ENCODE measurements at regions of chr6 and their contacts with region 1.

Region 1: DNA sequence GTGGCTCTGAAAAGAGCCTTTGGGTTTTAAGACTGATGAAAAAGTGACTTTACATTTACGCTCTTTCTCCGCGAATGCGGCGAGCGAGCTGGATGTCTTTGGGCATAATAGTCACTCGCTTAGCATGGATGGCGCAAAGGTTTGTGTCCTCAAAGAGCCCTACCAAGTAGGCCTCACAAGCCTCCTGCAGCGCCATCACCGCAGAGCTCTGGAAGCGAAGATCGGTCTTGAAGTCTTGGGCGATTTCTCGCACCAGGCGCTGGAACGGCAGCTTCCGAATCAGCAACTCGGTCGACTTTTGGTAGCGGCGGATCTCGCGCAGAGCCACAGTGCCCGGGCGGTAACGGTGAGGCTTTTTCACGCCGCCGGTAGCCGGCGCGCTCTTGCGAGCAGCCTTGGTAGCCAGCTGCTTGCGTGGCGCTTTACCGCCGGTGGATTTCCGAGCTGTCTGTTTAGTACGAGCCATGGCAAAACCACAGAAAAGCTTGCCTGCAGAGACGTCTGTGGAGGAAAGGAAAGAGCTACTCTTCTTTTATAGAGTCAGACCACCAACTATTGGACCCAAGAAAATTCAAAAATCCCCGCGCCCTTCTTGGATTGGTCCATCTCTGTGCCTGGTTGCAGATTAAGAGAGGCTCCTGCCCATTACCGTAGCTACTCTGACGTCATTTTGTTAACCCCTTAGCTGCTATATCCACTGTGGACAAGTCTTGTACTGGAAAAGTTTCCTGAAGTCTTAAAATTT is 55.5 kb upstream of the HFE start:
- DNase-seq: peak; percentile 91 to 95
- H3K4me3 ChIP-seq: peak overlapping the region; percentile 81
- H3K27ac ChIP-seq: peak overlapping the region; percentile 79
- H3K4me1 ChIP-seq: peaks cover 46% of the 10 kb centered on the region
- H3K27me3 ChIP-seq: no peaks in the 10 kb centered on the region
- CTCF ChIP-seq: no peak

Region 2: DNA sequence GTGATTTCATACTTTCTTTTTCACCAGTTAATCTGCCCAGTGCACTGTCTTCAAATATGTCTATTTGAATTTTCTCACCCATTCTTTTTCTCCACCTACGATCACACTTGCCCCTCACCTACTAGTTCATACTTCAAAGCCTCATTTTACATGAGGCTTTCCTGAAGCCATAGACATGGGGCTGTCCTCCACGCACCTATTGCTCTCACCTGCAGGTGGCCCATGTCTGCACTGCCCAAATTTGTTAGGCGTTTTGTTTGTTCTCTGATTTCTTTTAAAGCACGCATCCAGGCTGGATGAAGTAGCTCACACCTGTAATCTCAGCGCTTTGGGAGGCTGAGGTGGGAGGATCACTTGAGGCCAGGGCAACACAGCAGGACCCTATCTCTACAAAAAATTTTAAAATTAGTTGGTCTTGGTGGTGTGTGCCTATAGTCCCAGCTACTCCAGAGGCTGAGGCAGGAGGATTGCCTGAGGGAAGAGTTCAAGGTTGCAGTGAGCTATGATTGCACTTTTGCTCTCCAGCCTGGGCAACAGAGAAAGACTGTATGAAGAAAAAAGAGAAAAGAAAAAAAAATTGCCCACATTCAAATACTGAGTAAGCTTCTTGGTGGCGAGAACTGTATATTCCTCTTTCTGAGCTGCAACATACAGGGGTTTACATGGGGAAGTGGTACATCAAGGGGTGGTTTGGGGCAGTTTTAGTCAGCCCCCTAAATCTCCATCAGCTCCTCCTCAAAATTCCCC is 989.1 kb before region 1 on chr6:
- CTCF ChIA-PET with region 1: interaction called, 14 read pairs
- POLR2A ChIA-PET with region 1: no interaction called
- intact Hi-C with region 1: no loop called
- DNase-seq: no peak
- H3K4me3 ChIP-seq: no peak overlapping the region
- H3K27ac ChIP-seq: no peak overlapping the region
- H3K4me1 ChIP-seq: no peaks in the 10 kb centered on the region
- H3K27me3 ChIP-seq: no peaks in the 10 kb centered on the region
- CTCF ChIP-seq: no peak

Region 3: GRCh38 chr6:25596928-25597818 is 434.6 kb before region 1 on chr6:
- CTCF ChIA-PET with region 1: no interaction called
- POLR2A ChIA-PET with region 1: no interaction called
- intact Hi-C with region 1: no loop called
- DNase-seq: no peak
- H3K4me3 ChIP-seq: no peak overlapping the region
- H3K27ac ChIP-seq: no peak overlapping the region
- H3K4me1 ChIP-seq: no peaks in the 10 kb centered on the region
- H3K27me3 ChIP-seq: no peaks in the 10 kb centered on the region
- CTCF ChIP-seq: no peak

Region 4: GRCh38 chr6:25788305-25788922 is 243.4 kb before region 1 on chr6:
- CTCF ChIA-PET with region 1: no interaction called
- POLR2A ChIA-PET with region 1: no interaction called
- intact Hi-C with region 1: no loop called
- DNase-seq: peak; percentile 33 to 41
- H3K4me3 ChIP-seq: no peak overlapping the region
- H3K27ac ChIP-seq: no peak overlapping the region
- H3K4me1 ChIP-seq: no peaks in the 10 kb centered on the region
- H3K27me3 ChIP-seq: no peaks in the 10 kb centered on the region
- CTCF ChIP-seq: peak; percentile 66

Region 5: DNA sequence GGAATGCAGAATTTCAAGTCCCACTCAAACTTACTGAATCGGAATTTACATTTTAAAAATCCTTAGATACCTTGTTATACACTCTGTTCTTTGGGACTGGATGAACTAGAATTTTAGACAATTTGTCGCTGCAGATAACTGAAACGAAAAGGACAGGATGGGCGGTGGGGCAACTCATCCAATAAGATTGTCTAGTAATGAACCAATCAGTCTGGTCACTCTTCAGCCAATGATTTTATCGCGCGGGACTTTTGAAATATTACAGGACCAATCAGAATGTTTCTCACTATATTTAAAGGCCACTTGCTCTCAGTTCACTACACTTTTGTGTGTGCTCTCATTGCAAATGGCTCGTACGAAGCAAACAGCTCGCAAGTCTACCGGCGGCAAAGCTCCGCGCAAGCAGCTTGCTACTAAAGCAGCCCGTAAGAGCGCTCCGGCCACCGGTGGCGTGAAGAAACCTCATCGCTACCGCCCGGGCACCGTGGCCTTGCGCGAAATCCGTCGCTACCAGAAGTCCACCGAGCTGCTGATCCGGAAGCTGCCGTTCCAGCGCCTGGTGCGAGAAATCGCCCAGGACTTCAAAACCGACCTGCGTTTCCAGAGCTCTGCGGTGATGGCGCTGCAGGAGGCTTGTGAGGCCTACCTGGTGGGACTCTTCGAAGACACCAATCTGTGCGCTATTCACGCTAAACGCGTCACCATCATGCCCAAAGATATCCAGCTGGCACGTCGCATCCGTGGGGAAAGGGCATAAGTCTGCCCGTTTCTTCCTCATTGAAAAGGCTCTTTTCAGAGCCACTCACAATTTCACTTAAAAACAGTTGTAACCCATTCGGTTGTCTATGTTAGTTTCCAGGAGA is 13.5 kb after region 1 on chr6:
- CTCF ChIA-PET with region 1: interaction called, 10 read pairs
- POLR2A ChIA-PET with region 1: interaction called, 35 read pairs
- intact Hi-C with region 1: no loop called
- DNase-seq: peak; percentile 74 to 88
- H3K4me3 ChIP-seq: peak overlapping the region; percentile 59
- H3K27ac ChIP-seq: peak overlapping the region; percentile 77
- H3K4me1 ChIP-seq: peaks cover 21% of the 10 kb centered on the region; the same call in 1 of the 2 replicates
- H3K27me3 ChIP-seq: no peaks in the 10 kb centered on the region
- CTCF ChIP-seq: no peak; the same call in 1 of the 2 replicates

Region 6: DNA sequence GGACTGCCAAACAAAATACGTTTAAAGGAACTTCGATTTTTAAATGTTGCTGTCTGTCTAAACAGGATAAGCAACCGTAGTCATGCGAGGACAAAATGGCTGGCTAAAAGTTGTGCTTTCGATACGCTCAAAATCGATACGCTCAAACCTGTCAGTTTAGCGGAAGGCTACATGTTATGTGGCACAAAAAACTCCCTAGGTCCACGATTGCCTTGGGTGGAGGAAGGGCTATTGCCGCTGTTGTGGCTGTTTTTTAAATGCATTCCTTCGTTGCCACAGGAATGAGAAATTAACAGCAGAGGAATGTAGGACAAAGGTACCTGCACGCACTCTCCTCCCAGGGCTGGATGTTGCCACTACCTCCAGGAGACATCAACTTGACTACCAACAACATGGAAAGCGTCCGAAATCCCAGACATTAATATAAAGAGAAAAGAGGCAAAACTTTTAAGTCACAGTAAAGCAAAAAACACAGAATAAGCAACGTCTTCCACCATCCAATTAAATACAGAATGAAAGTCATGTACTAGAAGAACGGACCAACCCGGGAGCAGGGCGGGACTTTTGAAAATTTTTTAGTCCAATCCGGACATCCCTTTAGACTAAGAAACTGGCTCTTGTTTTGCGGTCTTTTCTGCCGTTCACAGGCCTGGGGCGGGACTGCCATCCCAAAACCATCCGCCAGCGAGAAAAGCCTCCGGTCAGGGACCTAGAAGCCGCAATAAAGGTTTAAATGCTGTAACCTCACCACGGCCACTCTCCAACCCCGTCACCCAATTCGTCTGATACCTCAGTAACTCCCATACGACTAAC is 23.3 kb after region 1 on chr6:
- CTCF ChIA-PET with region 1: interaction called, 4 read pairs
- POLR2A ChIA-PET with region 1: interaction called, 9 read pairs
- intact Hi-C with region 1: loop called (anchors 1 kb)
- DNase-seq: peak; percentile 79 to 94
- H3K4me3 ChIP-seq: peak overlapping the region; percentile 79
- H3K27ac ChIP-seq: peak overlapping the region; percentile 95
- H3K4me1 ChIP-seq: peaks cover 26% of the 10 kb centered on the region
- H3K27me3 ChIP-seq: no peaks in the 10 kb centered on the region
- CTCF ChIP-seq: 0 out of 2 replicates have a peak, but pooled peaks have one; percentile 16

Region 7: GRCh38 chr6:26258200-26258977 is 226.6 kb after region 1 on chr6:
- CTCF ChIA-PET with region 1: no interaction called
- POLR2A ChIA-PET with region 1: no interaction called
- intact Hi-C with region 1: no loop called
- DNase-seq: no peak
- H3K4me3 ChIP-seq: no peak overlapping the region
- H3K27ac ChIP-seq: no peak overlapping the region
- H3K4me1 ChIP-seq: no peaks in the 10 kb centered on the region
- H3K27me3 ChIP-seq: no peaks in the 10 kb centered on the region
- CTCF ChIP-seq: peak; percentile 33; the same call in 1 of the 2 replicates

Region 8: DNA sequence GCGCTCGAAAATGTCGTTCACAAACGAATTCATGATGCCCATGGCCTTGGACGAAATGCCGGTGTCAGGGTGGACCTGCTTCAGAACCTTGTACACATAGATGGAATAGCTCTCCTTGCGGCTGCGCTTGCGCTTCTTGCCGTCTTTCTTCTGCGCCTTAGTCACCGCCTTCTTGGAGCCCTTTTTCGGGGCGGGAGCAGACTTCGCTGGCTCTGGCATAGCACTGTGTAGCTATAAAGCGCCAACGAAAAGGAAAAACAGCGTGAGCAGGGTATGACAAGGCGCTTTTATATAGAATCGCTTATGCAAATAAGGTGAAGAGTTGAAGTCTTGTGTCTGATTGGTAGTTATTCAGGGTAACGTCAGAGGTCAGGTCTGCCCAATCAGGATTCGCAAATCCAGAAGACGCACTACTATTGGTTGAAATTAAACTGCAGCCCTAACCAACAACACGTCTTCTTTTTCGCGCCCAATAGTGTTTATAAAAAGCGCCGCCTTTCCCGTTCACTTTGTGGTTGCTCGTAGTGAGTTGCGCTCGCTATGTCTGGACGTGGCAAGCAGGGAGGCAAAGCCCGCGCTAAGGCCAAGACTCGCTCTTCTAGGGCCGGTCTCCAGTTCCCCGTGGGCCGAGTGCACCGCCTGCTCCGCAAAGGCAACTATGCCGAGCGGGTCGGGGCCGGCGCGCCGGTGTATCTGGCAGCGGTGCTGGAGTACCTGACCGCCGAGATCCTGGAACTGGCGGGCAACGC is 1100.9 kb after region 1 on chr6:
- CTCF ChIA-PET with region 1: no interaction called
- POLR2A ChIA-PET with region 1: interaction called, 4 read pairs
- intact Hi-C with region 1: loop called (anchors 5 kb)
- DNase-seq: peak; percentile 95 to 98
- H3K4me3 ChIP-seq: peak overlapping the region; percentile 74
- H3K27ac ChIP-seq: peak overlapping the region; percentile 80
- H3K4me1 ChIP-seq: peaks cover 16% of the 10 kb centered on the region
- H3K27me3 ChIP-seq: no peaks in the 10 kb centered on the region
- CTCF ChIP-seq: no peak

Measured in PC-9 (cell line).